ENCODE measurements at regions of chr1 and their contacts with region 1.

Region 1: GRCh38 chr1:207321079-207321789 is at the start of gene CD55:
- DNase-seq: peak; percentile 98 to 100 (median 99)
- ATAC-seq: peak; percentile 88
- H3K4me3 ChIP-seq: peak within 1 kb of the TSS; percentile 77 to 89
- H3K4me3 Mint-ChIP-seq: peak within 1 kb of the TSS; percentile 98
- H3K27ac ChIP-seq: peak within 1 kb of the TSS; percentile 94 to 98
- H3K27ac Mint-ChIP-seq: peak within 1 kb of the TSS; percentile 99
- H3K4me1 ChIP-seq: peaks cover 21% of the 10 kb centered on the region
- H3K4me1 Mint-ChIP-seq: peaks cover 44% of the 10 kb centered on the region
- H3K27me3 ChIP-seq: no peaks in the 10 kb centered on the region
- H3K27me3 Mint-ChIP-seq: no peaks in the 10 kb centered on the region
- CTCF ChIP-seq: peak; percentile 36
- total RNA-seq, gene CD55: 256 to 261 TPM

Region 2: DNA sequence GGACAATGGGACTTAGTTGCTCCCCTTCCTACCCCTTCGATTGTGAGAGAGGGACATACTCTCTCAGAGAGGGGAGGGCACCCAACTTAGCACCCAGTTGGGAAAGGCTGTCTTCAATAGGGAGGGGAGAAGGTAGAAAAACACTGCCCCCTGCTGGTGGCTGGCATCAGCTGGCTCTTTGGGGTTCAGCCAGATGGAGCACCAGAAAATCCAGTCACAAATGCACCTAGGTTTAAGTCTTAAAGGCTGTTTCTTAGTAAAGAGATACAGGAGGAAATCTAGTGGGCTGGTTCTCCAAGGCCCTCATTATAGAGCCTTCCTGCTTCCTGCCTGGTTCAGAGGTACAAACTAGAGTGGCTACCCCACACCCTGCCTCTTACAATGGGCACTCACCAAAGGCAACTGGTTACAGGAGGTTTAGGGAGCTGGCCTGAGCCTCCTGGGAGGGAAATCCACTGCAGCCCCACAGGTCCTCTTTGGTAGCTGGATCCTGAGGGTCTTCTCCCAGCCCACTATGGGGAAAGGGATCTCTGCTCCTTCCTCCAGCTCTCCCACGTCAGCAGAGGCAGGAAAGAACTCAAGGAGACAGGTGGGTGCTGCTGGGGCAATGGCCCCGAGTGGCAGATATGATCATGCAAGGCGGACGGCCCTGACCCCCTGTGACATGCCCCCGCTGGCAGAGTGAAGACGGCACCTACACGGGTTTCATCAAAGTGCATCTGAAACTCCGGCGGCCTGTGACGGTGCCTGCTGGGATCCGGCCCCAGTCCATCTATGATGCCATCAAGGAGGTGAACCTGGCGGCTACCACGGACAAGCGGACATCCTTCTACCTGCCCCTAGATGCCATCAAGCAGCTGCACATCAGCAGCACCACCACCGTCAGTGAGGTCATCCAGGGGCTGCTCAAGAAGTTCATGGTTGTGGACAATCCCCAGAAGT is 737.3 kb before region 1 on chr1:
- CTCF ChIA-PET with region 1: no interaction called
- POLR2A ChIA-PET with region 1: no interaction called
- intact Hi-C with region 1: loop called in 1 of 2 experiments (anchors 10 kb)
- DNase-seq: peak; percentile 70 to 93 (median 89)
- ATAC-seq: peak; percentile 18
- H3K4me3 ChIP-seq: no peak overlapping the region
- H3K4me3 Mint-ChIP-seq: peak overlapping the region; percentile 77
- H3K27ac ChIP-seq: peak overlapping the region; percentile 3 to 95
- H3K27ac Mint-ChIP-seq: peak overlapping the region; percentile 96
- H3K4me1 ChIP-seq: peaks cover 50% of the 10 kb centered on the region
- H3K4me1 Mint-ChIP-seq: peaks cover 68% of the 10 kb centered on the region
- H3K27me3 ChIP-seq: no peaks in the 10 kb centered on the region
- H3K27me3 Mint-ChIP-seq: no peaks in the 10 kb centered on the region
- CTCF ChIP-seq: peak; percentile 92

Region 3: DNA sequence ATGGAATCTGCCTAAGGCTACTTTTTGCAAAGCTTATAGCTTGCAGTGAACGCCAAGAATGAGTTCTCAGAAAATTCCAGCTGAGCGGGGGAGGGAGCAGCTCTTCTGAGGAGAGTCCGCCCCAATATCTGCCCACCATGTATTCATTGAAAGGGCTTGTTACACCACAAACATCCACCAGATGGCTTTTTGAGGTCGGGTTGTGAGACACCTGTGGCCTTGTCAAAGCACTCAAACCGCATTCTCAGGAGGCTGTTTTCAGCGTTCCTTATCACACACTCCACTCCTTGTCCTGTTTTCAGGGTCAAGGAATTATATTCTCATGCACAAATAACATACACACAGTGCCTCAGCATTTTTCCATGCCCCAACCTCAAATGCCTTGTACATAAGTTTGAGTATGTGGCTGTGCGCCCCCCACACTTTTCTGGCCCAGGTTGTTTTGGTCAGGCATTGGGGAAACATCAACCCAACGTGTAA is 236.5 kb before region 1 on chr1:
- CTCF ChIA-PET with region 1: interaction called, 3 read pairs
- POLR2A ChIA-PET with region 1: interaction called, 3 read pairs
- intact Hi-C with region 1: loop called (anchors 10 kb)
- DNase-seq: peak in 8 of 9 experiments; percentile 29 to 82 (median 60)
- ATAC-seq: peak; percentile 79
- H3K4me3 ChIP-seq: no peak overlapping the region
- H3K4me3 Mint-ChIP-seq: no peak overlapping the region
- H3K27ac ChIP-seq: no peak overlapping the region
- H3K27ac Mint-ChIP-seq: no peak overlapping the region
- H3K4me1 ChIP-seq: peaks cover 21% of the 10 kb centered on the region
- H3K4me1 Mint-ChIP-seq: peaks cover 23% of the 10 kb centered on the region
- H3K27me3 ChIP-seq: no peaks in the 10 kb centered on the region
- H3K27me3 Mint-ChIP-seq: peaks cover 6% of the 10 kb centered on the region
- CTCF ChIP-seq: peak; percentile 67

Region 4: GRCh38 chr1:207309775-207310273 is 11.4 kb before region 1 on chr1:
- CTCF ChIA-PET with region 1: interaction called, 5 read pairs
- POLR2A ChIA-PET with region 1: interaction called, 24 read pairs
- intact Hi-C with region 1: no loop called
- DNase-seq: no peak
- ATAC-seq: no peak
- H3K4me3 ChIP-seq: peak overlapping the region in 1 of 2 experiments; percentile 4
- H3K4me3 Mint-ChIP-seq: peak overlapping the region; percentile 61
- H3K27ac ChIP-seq: no peak overlapping the region
- H3K27ac Mint-ChIP-seq: peak overlapping the region; percentile 58
- H3K4me1 ChIP-seq: peaks cover 20% of the 10 kb centered on the region
- H3K4me1 Mint-ChIP-seq: peaks cover 22% of the 10 kb centered on the region
- H3K27me3 ChIP-seq: no peaks in the 10 kb centered on the region
- H3K27me3 Mint-ChIP-seq: no peaks in the 10 kb centered on the region
- CTCF ChIP-seq: no peak

Region 5: GRCh38 chr1:207404849-207405525 is 83.8 kb after region 1 on chr1:
- CTCF ChIA-PET with region 1: interaction called, 4 read pairs
- POLR2A ChIA-PET with region 1: interaction called, 13 read pairs
- intact Hi-C with region 1: loop called in 1 of 2 experiments (anchors 2 kb)
- DNase-seq: peak in 2 of 9 experiments; percentile 68 to 79
- ATAC-seq: peak; percentile 71
- H3K4me3 ChIP-seq: no peak overlapping the region
- H3K4me3 Mint-ChIP-seq: no peak overlapping the region
- H3K27ac ChIP-seq: no peak overlapping the region
- H3K27ac Mint-ChIP-seq: no peak overlapping the region
- H3K4me1 ChIP-seq: no peaks in the 10 kb centered on the region
- H3K4me1 Mint-ChIP-seq: peaks cover 3% of the 10 kb centered on the region
- H3K27me3 ChIP-seq: no peaks in the 10 kb centered on the region
- H3K27me3 Mint-ChIP-seq: peaks cover 5% of the 10 kb centered on the region
- CTCF ChIP-seq: peak; percentile 91

Region 6: DNA sequence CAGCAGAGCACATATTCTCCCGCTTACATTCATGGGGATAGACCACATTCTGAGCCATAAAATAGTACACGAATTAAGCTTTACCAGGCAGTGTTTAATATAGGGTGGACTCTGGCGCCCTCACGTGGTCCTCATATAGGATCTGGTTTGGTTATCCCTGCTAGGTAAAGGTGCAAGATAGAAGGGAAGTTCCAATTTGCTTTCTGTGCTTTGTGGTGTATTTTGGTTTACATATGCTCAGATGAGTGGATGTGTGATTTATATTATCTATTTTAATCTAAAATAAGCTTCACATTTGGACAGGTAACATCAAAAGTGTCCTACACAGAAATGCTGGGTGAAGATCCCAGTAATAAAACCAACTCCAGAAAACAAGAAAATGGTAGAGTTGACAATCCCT is 178.3 kb after region 1 on chr1:
- CTCF ChIA-PET with region 1: interaction called, 5 read pairs
- POLR2A ChIA-PET with region 1: interaction called, 7 read pairs
- intact Hi-C with region 1: loop called (anchors 2 to 5 kb)
- DNase-seq: peak; percentile 36 to 84 (median 71)
- ATAC-seq: peak; percentile 77
- H3K4me3 ChIP-seq: no peak overlapping the region
- H3K4me3 Mint-ChIP-seq: no peak overlapping the region
- H3K27ac ChIP-seq: no peak overlapping the region
- H3K27ac Mint-ChIP-seq: no peak overlapping the region
- H3K4me1 ChIP-seq: peaks cover 3% of the 10 kb centered on the region
- H3K4me1 Mint-ChIP-seq: peaks cover 23% of the 10 kb centered on the region
- H3K27me3 ChIP-seq: no peaks in the 10 kb centered on the region
- H3K27me3 Mint-ChIP-seq: peaks cover 16% of the 10 kb centered on the region
- CTCF ChIP-seq: peak; percentile 86